ENCODE measurements at regions of chr20 and their contacts with region 1.

Region 1: GRCh38 chr20:17682103-17682888 is at the start of gene RRBP1:
- DNase-seq: peak; percentile 97 to 100
- H3K4me3 ChIP-seq: peak within 1 kb of the TSS; percentile 81
- CTCF ChIP-seq: peak in 1 of 3 donors; percentile 51
- POLR2A ChIP-seq: peak in 1 of 2 donors; percentile 68
- total RNA-seq, gene RRBP1: 33.7 to 57.7 (median 43.2) TPM

Region 2: GRCh38 chr20:17536944-17537444 is 145.3 kb before region 1 on chr20:
- intact Hi-C with region 1: loop called (anchors 5 kb)
- DNase-seq: peak; percentile 66 to 88
- H3K4me3 ChIP-seq: no peak overlapping the region
- CTCF ChIP-seq: peak in 1 of 3 donors; percentile 96
- POLR2A ChIP-seq: no peak

Region 3: GRCh38 chr20:17617551-17618223 is 64.6 kb before region 1 on chr20:
- intact Hi-C with region 1: no loop called
- DNase-seq: peak in 1 of 2 donors; percentile 89
- H3K4me3 ChIP-seq: no peak overlapping the region
- CTCF ChIP-seq: peak in 1 of 3 donors; percentile 66
- POLR2A ChIP-seq: no peak

Region 4: GRCh38 chr20:17654649-17655285 is 27.5 kb before region 1 on chr20:
- intact Hi-C with region 1: no loop called
- DNase-seq: no peak
- H3K4me3 ChIP-seq: no peak overlapping the region
- CTCF ChIP-seq: no peak
- POLR2A ChIP-seq: no peak

Region 5: GRCh38 chr20:18005231-18006109 is 323.2 kb after region 1 on chr20:
- intact Hi-C with region 1: loop called (anchors 10 kb)
- DNase-seq: peak in 1 of 2 donors; percentile 82
- H3K4me3 ChIP-seq: no peak overlapping the region
- CTCF ChIP-seq: no peak
- POLR2A ChIP-seq: no peak